HCT116 (cell line): ENCODE measurements at regions of chr15 and their contacts with region 1.

Region 1: DNA sequence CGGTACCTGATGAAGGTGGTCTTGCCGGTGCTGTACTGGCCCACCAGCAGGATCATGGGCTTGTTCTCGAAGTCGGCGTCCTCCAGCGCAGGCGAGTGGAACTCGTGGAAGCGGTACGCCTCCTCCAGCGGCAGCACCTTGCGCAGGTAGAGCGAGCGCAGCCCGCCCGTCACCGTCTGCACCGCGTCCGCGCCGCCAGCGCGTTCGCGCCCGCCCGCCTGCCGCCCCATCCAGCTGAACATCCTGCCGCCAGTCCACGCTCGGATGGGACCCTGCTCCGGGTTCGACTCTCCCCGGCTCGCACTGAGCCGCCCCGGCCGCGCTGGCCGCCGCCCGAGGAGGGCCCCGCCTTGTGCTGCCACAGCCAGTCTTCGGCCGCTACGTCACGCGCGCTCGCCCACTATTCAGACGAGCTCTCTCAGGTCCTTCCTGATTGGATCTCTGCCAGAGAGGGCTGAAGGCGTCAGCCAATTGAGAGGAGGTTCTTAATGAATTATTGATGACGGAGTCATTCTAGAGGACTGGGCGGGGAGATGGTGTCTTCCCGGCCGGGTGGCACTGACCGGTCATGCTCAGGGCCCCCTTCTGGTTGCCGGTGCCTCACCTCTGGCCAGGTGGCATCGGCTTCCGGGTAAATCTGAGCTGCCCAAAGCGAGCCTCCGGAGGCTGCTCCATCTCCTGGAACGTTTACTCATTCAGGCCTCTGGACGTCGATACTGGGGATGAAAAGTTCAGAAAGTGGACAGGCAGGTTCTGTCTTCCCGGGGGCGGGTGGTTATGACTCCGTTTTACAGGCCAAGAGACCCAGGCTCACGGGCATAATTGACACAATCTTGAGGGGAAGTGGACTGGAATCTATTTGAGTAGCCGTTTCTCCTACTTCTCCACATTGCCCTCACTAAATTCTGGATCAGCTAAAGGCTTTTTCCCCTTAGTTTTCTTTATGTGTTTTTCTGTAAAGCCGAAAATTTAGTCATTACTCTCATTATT is at the start of gene EHD4:
- DNase-seq: peak; percentile 99
- ATAC-seq: peak; percentile 92
- H3K4me3 ChIP-seq: peak within 1 kb of the TSS; percentile 85 to 93
- H3K27ac ChIP-seq: peak within 1 kb of the TSS; percentile 86
- H3K4me1 ChIP-seq: peaks cover 21 to 36% of the 10 kb centered on the region in 2 experiments
- H3K27me3 ChIP-seq: no peaks in the 10 kb centered on the region
- CTCF ChIP-seq: peak; percentile 4 to 40 (median 38); a peak in 4 of 6 replicates
- POLR2A ChIP-seq: peak; percentile 62
- RAD21 ChIP-seq: no peak; the same call in 1 of the 2 replicates
- total RNA-seq, gene EHD4: 28.0 TPM

Region 2: DNA sequence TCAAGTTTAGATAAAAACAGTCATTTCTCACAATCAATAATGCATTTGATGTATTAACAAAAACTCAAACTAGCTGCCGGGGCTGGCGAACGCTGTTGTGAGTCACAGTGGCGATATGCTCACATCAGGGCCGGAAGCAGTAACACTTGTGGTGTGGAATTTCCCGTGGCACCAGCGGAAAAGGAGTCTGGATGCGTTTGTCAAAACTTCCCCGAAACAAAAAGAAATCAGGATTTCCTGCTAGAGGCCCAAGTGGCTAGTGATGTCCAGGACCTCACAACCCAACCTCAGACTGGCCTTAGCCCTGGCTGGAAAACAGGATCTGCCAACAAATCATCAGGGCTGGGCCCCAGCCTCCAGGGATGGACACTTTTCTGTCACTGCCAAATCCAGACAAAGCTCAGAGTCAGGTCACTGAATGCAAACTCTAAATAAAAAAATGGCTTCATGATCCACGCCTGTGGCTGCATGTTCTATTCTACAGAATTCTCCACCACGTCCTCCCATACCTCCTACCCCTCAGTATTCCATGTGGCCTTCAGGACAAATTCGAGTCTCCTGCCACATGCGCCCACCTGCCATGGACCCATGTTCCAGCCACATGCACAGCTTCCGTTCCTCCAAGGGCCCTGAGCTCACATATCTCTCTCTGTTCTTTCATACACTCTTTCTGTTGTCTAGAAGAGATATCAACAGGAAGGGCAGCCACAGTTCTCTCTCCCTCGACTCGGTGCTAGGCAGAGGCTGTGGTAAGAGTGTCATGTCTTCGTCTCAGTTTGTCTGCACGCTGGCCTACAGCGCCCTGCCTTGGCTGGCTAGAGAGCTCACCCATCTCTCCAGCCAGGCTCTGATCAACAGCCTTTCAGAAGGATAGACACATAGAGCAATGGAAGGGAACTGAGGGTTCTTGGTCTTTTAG is 35.6 kb before region 1 on chr15:
- CTCF ChIA-PET with region 1: interaction called, 3 read pairs
- POLR2A ChIA-PET with region 1: interaction called, 7 read pairs
- RAD21 ChIA-PET with region 1: interaction called in 1 of 2 experiments, 3 read pairs
- intact Hi-C with region 1: loop called (anchors 5 kb)
- DNase-seq: no peak
- ATAC-seq: no peak
- H3K4me3 ChIP-seq: no peak overlapping the region
- H3K27ac ChIP-seq: no peak overlapping the region
- H3K4me1 ChIP-seq: peaks cover 58 to 95% of the 10 kb centered on the region in 2 experiments
- H3K27me3 ChIP-seq: no peaks in the 10 kb centered on the region
- CTCF ChIP-seq: no peak
- POLR2A ChIP-seq: no peak
- RAD21 ChIP-seq: no peak

Region 3: GRCh38 chr15:42056934-42057779 is 84.6 kb after region 1 on chr15:
- CTCF ChIA-PET with region 1: no interaction called
- POLR2A ChIA-PET with region 1: no interaction called
- RAD21 ChIA-PET with region 1: no interaction called
- intact Hi-C with region 1: loop called (anchors 5 kb)
- DNase-seq: peak; percentile 95
- ATAC-seq: peak; percentile 88
- H3K4me3 ChIP-seq: peak overlapping the region; percentile 47 to 54
- H3K27ac ChIP-seq: peak overlapping the region; percentile 61
- H3K4me1 ChIP-seq: peaks cover 8 to 26% of the 10 kb centered on the region in 2 experiments
- H3K27me3 ChIP-seq: no peaks in the 10 kb centered on the region
- CTCF ChIP-seq: peak; percentile 64 to 74 (median 68)
- POLR2A ChIP-seq: peak; percentile 62
- RAD21 ChIP-seq: peak; percentile 73